Common myeloid progenitor, CD34-positive (primary cell): ENCODE measurements at regions of chr10 and their contacts with region 1.

Region 1: DNA sequence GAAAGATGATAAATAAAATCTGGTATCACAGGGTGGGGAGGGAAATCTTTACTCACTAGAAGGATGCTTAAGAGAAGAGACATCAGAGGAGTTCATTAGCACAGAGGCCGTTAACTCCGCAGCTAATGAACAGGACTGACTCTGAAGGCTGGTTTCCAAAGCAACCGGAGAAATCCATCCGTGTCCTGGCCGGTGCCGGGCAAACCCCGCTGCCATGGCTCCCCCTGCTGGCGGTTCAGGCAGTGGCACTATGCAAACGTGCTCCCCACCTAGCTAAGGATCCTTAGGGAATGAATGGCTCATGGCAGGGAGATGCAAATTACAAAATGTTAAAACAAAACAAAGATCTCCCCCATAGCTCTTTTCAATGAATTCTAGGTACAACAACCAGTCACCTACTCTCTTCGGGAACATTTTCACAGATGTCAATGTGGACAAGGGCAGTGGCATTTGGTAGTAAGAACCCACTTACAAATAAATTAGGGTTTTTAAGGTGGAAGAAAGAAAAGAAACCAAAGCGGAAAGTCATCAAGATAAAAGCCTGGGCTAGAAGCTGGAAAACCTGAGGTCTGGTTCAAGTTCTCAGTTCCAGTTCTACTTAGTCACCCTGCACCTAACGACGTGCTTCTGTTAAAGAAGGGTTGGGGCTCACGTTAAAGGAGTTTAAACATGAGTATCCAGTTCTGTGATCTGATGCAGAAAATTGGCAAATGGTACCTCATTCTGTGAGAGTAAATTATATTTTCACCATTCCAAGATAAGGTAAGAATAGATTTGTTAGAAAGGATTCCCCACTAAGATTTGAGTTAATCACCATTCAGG is 138.2 kb downstream of the SVIL start:
- DNase-seq: peak; percentile 25 to 50 (median 50)
- H3K4me3 ChIP-seq: no peak overlapping the region
- H3K27ac ChIP-seq: no peak overlapping the region
- H3K4me1 ChIP-seq: no peaks in the 10 kb centered on the region
- H3K27me3 ChIP-seq: no peaks in the 10 kb centered on the region

Region 2: DNA sequence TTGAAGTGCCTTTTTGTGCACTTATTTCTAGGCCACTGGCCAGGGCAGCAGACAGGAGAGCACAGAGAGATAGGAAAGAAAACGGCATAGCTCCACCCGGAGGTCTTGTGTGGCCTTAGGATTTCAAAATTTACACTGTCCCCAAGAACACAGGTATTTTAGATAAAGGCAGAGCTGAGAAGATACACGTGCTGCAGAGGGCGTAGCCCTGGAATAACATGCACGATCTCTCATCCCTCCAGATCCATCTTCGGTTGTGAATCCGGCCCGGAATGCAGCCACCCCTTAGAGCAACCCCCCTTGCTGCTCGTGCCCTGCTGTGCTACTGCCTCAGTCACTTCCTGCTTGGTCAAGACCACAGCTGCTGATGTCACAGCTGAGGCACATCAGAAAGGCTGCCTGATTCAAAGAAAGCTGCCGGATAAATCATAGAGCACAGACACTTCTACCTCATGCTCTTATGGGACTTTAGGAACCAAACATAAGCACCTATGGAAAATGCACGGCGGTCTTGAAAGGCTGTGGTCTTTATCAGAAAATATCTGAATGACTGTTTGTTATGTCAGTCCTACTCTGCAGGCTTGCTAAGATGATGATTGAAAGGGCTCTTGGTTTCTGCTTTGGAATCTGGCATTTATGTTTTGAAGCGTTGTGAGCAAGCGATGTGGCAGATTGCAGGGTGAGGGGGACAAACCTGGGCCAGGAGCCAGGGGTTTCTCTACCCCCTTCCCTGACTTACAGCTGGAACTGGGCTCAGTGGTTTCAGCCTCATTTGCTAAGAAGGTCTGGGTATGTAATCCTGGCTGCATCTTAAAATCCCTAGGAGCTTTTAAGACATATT is 13.7 kb before region 1 on chr10:
- CTCF ChIA-PET with region 1: interaction called, 11 read pairs
- POLR2A ChIA-PET with region 1: no interaction called
- DNase-seq: peak in 2 of 3 donors; percentile 36 to 44
- H3K4me3 ChIP-seq: peak overlapping the region in 1 of 7 experiments; percentile 32
- H3K27ac ChIP-seq: no peak overlapping the region
- H3K4me1 ChIP-seq: peaks cover 0 to 19% (median 11%) of the 10 kb centered on the region in 4 experiments
- H3K27me3 ChIP-seq: no peaks in the 10 kb centered on the region

Region 3: DNA sequence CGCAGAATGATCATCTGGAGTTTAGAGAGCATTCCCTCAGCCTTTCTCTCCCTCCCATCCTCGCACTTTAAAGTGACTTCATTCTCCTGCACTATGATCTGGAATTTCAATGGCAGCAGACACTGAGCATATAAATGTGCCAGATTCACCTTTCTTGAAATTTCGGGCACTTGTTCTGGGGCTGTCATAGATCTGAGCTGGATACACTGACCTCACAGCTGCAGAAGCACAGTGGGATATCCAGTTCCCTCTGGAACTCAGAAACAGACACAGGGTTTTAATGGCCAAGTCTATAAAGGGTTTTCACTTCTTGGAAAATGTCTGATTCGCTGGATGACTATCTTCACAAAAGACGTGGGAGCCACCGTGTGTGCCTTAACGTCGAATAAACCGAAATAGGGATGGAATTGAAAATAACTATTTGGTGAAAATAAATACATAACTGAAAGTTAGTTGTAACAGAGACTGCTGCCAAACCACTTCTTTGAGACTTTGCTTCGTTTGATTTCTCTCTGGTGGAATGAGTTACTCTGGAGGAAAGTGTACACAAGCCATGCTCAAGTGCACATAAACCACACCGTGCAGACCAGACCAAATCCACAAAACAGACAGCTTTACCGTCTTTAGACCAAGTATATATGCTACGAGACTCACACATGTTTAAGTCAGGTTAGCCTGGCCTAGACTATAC is 12.1 kb after region 1 on chr10:
- CTCF ChIA-PET with region 1: interaction called, 11 read pairs
- POLR2A ChIA-PET with region 1: no interaction called
- DNase-seq: no peak
- H3K4me3 ChIP-seq: no peak overlapping the region
- H3K27ac ChIP-seq: no peak overlapping the region
- H3K4me1 ChIP-seq: no peaks in the 10 kb centered on the region
- H3K27me3 ChIP-seq: no peaks in the 10 kb centered on the region

Region 4: GRCh38 chr10:29543715-29544114 is 47.2 kb after region 1 on chr10:
- CTCF ChIA-PET with region 1: no interaction called
- POLR2A ChIA-PET with region 1: no interaction called
- DNase-seq: no peak
- H3K4me3 ChIP-seq: no peak overlapping the region
- H3K27ac ChIP-seq: no peak overlapping the region
- H3K4me1 ChIP-seq: peaks cover 0 to 2% (median 0%) of the 10 kb centered on the region in 4 experiments
- H3K27me3 ChIP-seq: no peaks in the 10 kb centered on the region